ENCODE measurements at regions of chr22 and their contacts with region 1.

Region 1: GRCh38 chr22:28989035-28989464 is 72.6 kb downstream of the C22orf31 start:
- DNase-seq: no peak
- ATAC-seq: no peak
- H3K4me3 ChIP-seq: no peak overlapping the region
- H3K4me3 Mint-ChIP-seq: no peak overlapping the region
- H3K27ac ChIP-seq: no peak overlapping the region
- H3K27ac Mint-ChIP-seq: no peak overlapping the region
- H3K4me1 ChIP-seq: no peaks in the 10 kb centered on the region
- H3K4me1 Mint-ChIP-seq: no peaks in the 10 kb centered on the region
- H3K27me3 ChIP-seq: no peaks in the 10 kb centered on the region
- H3K27me3 Mint-ChIP-seq: peaks cover 5% of the 10 kb centered on the region
- CTCF ChIP-seq: no peak

Region 2: DNA sequence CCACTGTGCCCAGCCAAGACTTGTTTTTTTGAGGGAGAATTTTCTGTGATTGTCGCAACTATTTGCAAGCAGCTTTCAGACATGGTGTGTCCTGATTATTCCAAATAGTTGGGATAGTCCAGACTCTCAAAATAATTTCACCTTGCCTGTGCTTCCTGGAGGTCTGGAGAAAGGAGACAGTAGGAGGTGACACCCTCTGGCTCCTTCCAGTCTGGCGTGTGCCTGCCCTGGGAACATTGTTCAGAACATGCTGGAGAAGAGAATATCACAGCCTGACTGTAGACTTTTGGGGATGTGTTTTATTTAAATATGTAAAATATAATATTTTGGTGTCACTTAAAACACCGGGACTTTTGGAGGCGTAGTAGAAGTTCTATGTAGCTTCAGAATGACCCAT is 90.8 kb before region 1 on chr22:
- CTCF ChIA-PET with region 1: no interaction called
- POLR2A ChIA-PET with region 1: interaction called, 14 read pairs
- intact Hi-C with region 1: no loop called
- DNase-seq: no peak
- ATAC-seq: no peak
- H3K4me3 ChIP-seq: no peak overlapping the region
- H3K4me3 Mint-ChIP-seq: no peak overlapping the region
- H3K27ac ChIP-seq: no peak overlapping the region
- H3K27ac Mint-ChIP-seq: no peak overlapping the region
- H3K4me1 ChIP-seq: peaks cover 27 to 28% of the 10 kb centered on the region in 2 donors
- H3K4me1 Mint-ChIP-seq: peaks cover 40% of the 10 kb centered on the region
- H3K27me3 ChIP-seq: peaks cover 0 to 2% (median 0%) of the 10 kb centered on the region in 4 experiments
- H3K27me3 Mint-ChIP-seq: peaks cover 5% of the 10 kb centered on the region
- CTCF ChIP-seq: no peak

Region 3: DNA sequence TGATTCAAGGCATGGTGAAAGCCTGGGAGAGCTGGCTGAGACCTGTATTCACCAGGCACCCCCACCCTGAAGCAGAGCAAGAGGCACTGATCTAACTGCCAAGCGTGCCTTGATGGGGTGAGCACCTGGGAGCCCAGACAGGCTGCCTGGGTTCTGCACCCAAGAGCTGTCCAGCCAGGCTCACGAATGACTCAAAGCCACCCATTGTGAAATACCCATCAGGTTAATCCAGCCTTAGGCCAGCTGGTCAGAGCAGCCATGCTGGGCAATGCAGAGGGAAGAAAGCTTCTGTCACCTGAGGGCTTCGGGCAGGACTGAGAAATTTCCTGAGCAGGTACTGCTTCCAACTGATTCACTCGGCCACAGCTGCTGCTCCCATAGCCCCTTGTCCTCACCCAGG is 542.4 kb after region 1 on chr22:
- CTCF ChIA-PET with region 1: no interaction called
- POLR2A ChIA-PET with region 1: no interaction called
- intact Hi-C with region 1: no loop called
- DNase-seq: no peak
- ATAC-seq: no peak
- H3K4me3 ChIP-seq: no peak overlapping the region
- H3K4me3 Mint-ChIP-seq: no peak overlapping the region
- H3K27ac ChIP-seq: no peak overlapping the region
- H3K27ac Mint-ChIP-seq: no peak overlapping the region
- H3K4me1 ChIP-seq: no peaks in the 10 kb centered on the region
- H3K4me1 Mint-ChIP-seq: no peaks in the 10 kb centered on the region
- H3K27me3 ChIP-seq: no peaks in the 10 kb centered on the region
- H3K27me3 Mint-ChIP-seq: no peaks in the 10 kb centered on the region
- CTCF ChIP-seq: no peak

Measured in B cell (primary cell).